GM12878 (cell line): ENCODE measurements at regions of chr19 and their contacts with region 1.

Region 1: GRCh38 chr19:40305403-40305802 is 20.3 kb upstream of the AKT2 start:
- DNase-seq: peak; percentile 38
- ATAC-seq: peak; percentile 87
- H3K4me3 ChIP-seq: no peak overlapping the region
- H3K27ac ChIP-seq: no peak overlapping the region
- H3K4me1 ChIP-seq: no peaks in the 10 kb centered on the region
- H3K27me3 ChIP-seq: no peaks in the 10 kb centered on the region
- CTCF ChIP-seq: peak; percentile 59 to 83 (median 77); a peak in 5 of 6 replicates
- EP300 ChIP-seq: no peak
- POLR2A ChIP-seq: no peak
- RAD21 ChIP-seq: peak; percentile 95

Region 2: DNA sequence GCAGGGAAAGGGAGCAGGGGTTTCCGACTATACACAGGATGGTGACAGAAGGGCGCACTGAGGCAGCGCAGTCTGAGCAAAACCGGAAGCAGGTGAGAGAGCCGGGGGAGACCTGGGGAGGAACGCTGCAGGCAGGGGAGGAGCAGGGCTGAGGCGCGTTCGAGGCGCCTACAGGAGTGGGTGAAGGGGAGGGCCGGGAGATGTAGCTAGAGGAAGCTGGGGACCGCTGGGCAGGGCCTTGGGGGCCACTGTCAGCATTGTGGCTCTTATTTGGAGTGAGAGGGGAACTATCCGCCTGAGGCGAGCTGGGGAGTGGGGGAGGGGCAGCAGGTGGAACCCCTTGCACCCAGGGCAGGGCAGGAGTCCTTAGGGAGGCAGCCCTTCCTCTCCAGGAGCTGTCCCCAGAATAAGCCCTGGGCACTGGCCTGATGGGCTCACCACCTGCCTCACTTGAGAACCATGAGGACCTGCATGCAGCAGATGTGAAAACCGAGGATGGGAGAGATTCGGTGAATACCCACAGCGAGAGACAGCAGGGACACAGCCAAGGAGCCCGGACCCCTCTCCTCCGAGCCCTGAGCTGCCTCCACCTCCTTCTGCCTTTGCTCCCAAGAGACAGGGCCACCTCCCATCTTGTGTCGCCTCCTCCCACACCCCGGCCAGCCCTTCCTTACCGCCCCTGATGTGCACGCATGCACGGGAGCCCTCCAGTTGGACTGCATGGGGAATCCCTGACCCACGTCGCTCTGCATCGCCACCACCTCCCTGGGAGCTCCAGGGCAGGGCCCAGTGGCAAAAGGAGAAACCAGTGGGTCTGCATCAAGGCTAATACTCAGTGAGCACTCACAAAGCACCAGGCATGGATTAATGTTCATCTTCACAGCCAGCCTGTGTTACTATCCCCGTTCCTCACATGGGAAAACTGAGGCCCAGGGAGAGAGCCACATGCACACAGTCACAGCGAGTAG is 30.5 kb before region 1 on chr19:
- CTCF ChIA-PET with region 1: interaction called, 11 read pairs
- POLR2A ChIA-PET with region 1: no interaction called
- RAD21 ChIA-PET with region 1: interaction called, 3 read pairs
- SMC1A ChIA-PET with region 1: interaction called, 3 read pairs
- in situ Hi-C with region 1: no loop called
- intact Hi-C with region 1: no loop called
- DNase-seq: no peak
- ATAC-seq: peak; percentile 80
- H3K4me3 ChIP-seq: peak overlapping the region; percentile 29; the same call in 1 of the 2 replicates
- H3K27ac ChIP-seq: peak overlapping the region; percentile 61
- H3K4me1 ChIP-seq: peaks cover 24% of the 10 kb centered on the region
- H3K27me3 ChIP-seq: no peaks in the 10 kb centered on the region
- CTCF ChIP-seq: no peak
- EP300 ChIP-seq: no peak
- POLR2A ChIP-seq: no peak
- RAD21 ChIP-seq: no peak

Region 3: GRCh38 chr19:40403262-40403984 is 98.0 kb after region 1 on chr19:
- CTCF ChIA-PET with region 1: interaction called, 11 read pairs
- POLR2A ChIA-PET with region 1: no interaction called
- RAD21 ChIA-PET with region 1: interaction called, 13 read pairs
- SMC1A ChIA-PET with region 1: interaction called, 5 read pairs
- in situ Hi-C with region 1: no loop called
- intact Hi-C with region 1: no loop called
- DNase-seq: peak; percentile 69
- ATAC-seq: peak; percentile 96
- H3K4me3 ChIP-seq: peak overlapping the region; percentile 85
- H3K27ac ChIP-seq: peak overlapping the region; percentile 37; the same call in 1 of the 2 replicates
- H3K4me1 ChIP-seq: peaks cover 8% of the 10 kb centered on the region
- H3K27me3 ChIP-seq: no peaks in the 10 kb centered on the region
- CTCF ChIP-seq: no peak
- EP300 ChIP-seq: no peak
- POLR2A ChIP-seq: peak; percentile 44
- RAD21 ChIP-seq: no peak

Region 4: GRCh38 chr19:40444192-40445028 is 139.0 kb after region 1 on chr19 and contains the start of gene SERTAD3:
- CTCF ChIA-PET with region 1: interaction called, 13 read pairs
- POLR2A ChIA-PET with region 1: interaction called, 5 read pairs
- RAD21 ChIA-PET with region 1: interaction called, 25 read pairs
- SMC1A ChIA-PET with region 1: interaction called, 24 read pairs
- in situ Hi-C with region 1: no loop called
- intact Hi-C with region 1: loop called (anchors 2 kb)
- DNase-seq: peak; percentile 76
- ATAC-seq: peak; percentile 88
- H3K4me3 ChIP-seq: peak within 1 kb of the TSS; percentile 88
- H3K27ac ChIP-seq: peak within 1 kb of the TSS; percentile 94
- H3K4me1 ChIP-seq: peaks cover 5% of the 10 kb centered on the region
- H3K27me3 ChIP-seq: no peaks in the 10 kb centered on the region
- CTCF ChIP-seq: peak; percentile 25 to 60 (median 52); a peak in 4 of 6 replicates
- EP300 ChIP-seq: peak in 1 of 2 experiments; percentile 38; a peak in 1 of 4 replicates
- POLR2A ChIP-seq: peak; percentile 97
- RAD21 ChIP-seq: peak; percentile 65
- polyA plus RNA-seq, gene SERTAD3: 4.2 to 8.4 TPM

Region 5: GRCh38 chr19:40523322-40524047 is 218.1 kb after region 1 on chr19:
- CTCF ChIA-PET with region 1: interaction called, 7 read pairs
- POLR2A ChIA-PET with region 1: interaction called, 3 read pairs
- RAD21 ChIA-PET with region 1: interaction called, 12 read pairs
- SMC1A ChIA-PET with region 1: interaction called, 8 read pairs
- in situ Hi-C with region 1: no loop called
- intact Hi-C with region 1: loop called (anchors 5 kb)
- DNase-seq: no peak
- ATAC-seq: peak; percentile 91
- H3K4me3 ChIP-seq: no peak overlapping the region
- H3K27ac ChIP-seq: no peak overlapping the region
- H3K4me1 ChIP-seq: no peaks in the 10 kb centered on the region
- H3K27me3 ChIP-seq: no peaks in the 10 kb centered on the region; a peak in 1 of 4 replicates
- CTCF ChIP-seq: peak; percentile 70 to 72 (median 70)
- EP300 ChIP-seq: no peak
- POLR2A ChIP-seq: no peak
- RAD21 ChIP-seq: peak; percentile 55

Region 6: DNA sequence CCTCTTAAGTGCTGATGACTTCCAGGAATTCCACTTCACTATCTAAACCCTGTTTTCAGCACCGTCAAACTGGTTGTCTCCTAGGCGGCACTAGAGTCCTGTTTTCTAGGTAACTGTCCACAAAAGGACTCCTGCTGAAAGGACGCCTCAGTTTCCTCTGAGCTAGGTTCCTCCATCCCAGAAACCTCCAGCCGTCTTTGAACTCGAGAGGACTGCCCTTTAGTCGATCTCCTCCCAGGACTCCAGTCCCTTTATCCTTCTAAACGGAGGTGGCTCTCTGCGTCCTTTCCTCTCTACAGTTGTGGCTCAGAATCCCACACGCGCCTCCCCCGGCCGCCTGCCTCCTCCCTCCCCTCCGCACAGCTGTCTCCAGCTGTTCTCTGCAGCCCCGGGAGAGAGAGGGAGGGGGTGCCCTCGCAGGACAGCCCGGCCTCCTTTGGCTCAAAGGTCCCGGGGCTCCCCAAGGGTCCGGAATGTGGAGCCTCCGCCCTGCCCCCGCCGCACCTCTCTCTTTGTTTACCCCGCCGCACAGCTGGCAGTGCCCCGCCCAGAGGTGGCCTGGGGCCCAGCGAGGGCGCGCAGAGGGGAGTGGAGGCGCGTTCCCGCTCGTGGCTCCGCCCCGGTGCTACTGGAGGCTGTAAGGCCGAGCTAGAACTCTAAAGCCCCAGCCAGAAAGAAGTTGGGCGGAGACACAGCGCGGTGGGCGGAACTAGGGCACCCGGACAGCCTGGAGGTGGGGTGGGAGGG is 298.2 kb after region 1 on chr19:
- CTCF ChIA-PET with region 1: interaction called, 25 read pairs
- POLR2A ChIA-PET with region 1: no interaction called
- RAD21 ChIA-PET with region 1: interaction called, 9 read pairs
- SMC1A ChIA-PET with region 1: interaction called, 4 read pairs
- in situ Hi-C with region 1: loop called (anchors 10 kb)
- intact Hi-C with region 1: loop called (anchors 1 kb)
- DNase-seq: peak; percentile 88
- ATAC-seq: peak; percentile 86
- H3K4me3 ChIP-seq: peak overlapping the region; percentile 56
- H3K27ac ChIP-seq: no peak overlapping the region
- H3K4me1 ChIP-seq: peaks cover 19% of the 10 kb centered on the region
- H3K27me3 ChIP-seq: peaks cover 8% of the 10 kb centered on the region in 2 experiments
- CTCF ChIP-seq: no peak
- EP300 ChIP-seq: no peak
- POLR2A ChIP-seq: peak; percentile 37; the same call in 1 of the 2 replicates
- RAD21 ChIP-seq: no peak